ENCODE measurements at regions of chr7 and their contacts with region 1.

Region 1: DNA sequence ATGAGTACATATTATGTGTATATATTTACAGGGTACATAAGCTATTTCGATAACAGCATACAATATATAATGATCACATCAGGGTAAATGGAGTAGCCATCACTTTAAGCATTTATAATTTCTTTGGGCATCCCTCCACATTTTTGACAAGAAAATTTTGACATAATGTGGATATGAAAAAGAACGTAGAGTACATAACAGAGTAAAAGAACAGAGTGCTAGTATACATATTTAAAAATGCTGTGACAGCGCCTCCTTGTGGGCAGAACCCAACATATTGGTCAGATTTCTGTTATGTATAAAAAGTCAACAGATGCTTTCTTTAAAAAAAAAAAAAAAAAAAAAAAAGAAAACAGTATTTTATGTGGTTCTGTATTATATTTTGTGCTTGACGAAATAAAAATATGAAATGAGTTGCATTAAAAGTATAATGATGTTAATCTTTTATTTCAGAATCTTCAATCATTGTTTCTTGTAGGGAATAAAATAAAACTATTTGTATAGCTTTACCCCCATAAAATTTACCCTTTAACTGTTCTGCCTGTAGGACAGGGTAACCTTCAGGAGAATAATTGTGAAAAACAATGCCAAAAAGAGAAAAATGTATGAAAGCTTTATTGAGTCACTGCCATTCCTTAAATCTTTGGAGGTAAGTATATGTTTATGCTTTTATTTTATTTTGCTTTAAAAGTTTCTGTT is 18.3 kb upstream of the HBP1 start:
- DNase-seq: peak; percentile 64 to 86 (median 81)
- ATAC-seq: peak; percentile 88
- H3K4me3 ChIP-seq: no peak overlapping the region
- H3K4me3 Mint-ChIP-seq: no peak overlapping the region
- H3K27ac ChIP-seq: no peak overlapping the region
- H3K27ac Mint-ChIP-seq: no peak overlapping the region
- H3K4me1 ChIP-seq: no peaks in the 10 kb centered on the region
- H3K4me1 Mint-ChIP-seq: peaks cover 6% of the 10 kb centered on the region
- H3K27me3 ChIP-seq: no peaks in the 10 kb centered on the region
- H3K27me3 Mint-ChIP-seq: no peaks in the 10 kb centered on the region
- CTCF ChIP-seq: peak; percentile 95

Region 2: GRCh38 chr7:106176414-106177299 is 973.9 kb before region 1 on chr7:
- CTCF ChIA-PET with region 1: interaction called, 3 read pairs
- POLR2A ChIA-PET with region 1: no interaction called
- intact Hi-C with region 1: loop called in 1 of 2 experiments (anchors 5 kb)
- DNase-seq: peak; percentile 46 to 81 (median 69)
- ATAC-seq: peak; percentile 79
- H3K4me3 ChIP-seq: no peak overlapping the region
- H3K4me3 Mint-ChIP-seq: no peak overlapping the region
- H3K27ac ChIP-seq: no peak overlapping the region
- H3K27ac Mint-ChIP-seq: no peak overlapping the region
- H3K4me1 ChIP-seq: no peaks in the 10 kb centered on the region
- H3K4me1 Mint-ChIP-seq: peaks cover 2% of the 10 kb centered on the region
- H3K27me3 ChIP-seq: peaks cover 2 to 4% of the 10 kb centered on the region in 2 experiments
- H3K27me3 Mint-ChIP-seq: peaks cover 10% of the 10 kb centered on the region
- CTCF ChIP-seq: peak; percentile 85

Region 3: DNA sequence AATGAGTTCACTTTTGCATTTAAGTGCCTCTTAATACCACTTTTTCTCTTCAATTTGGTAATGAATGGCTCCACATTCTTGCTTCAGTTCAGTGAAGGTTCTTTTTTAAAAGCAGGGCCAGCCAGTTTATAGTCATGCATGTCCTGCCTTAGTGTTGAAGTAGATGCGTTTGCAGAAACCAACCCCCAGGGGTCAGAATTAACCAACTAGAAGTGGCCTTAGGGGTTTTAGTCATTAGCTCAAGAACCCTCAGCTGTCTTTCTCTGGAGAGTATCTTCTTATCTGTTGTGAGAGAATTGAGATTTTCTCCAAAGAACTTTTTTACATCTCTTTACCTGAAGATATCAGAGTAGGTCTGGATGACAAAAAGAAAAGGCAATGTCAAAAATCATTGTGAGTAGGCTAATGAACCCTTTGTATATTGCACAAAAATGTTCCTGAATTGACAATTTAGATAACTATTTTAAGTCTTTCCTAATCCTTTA is 203.2 kb before region 1 on chr7:
- CTCF ChIA-PET with region 1: interaction called, 25 read pairs
- POLR2A ChIA-PET with region 1: no interaction called
- intact Hi-C with region 1: loop called (anchors 1 kb)
- DNase-seq: peak in 5 of 9 experiments; percentile 1 to 67 (median 37)
- ATAC-seq: peak; percentile 66
- H3K4me3 ChIP-seq: no peak overlapping the region
- H3K4me3 Mint-ChIP-seq: no peak overlapping the region
- H3K27ac ChIP-seq: no peak overlapping the region
- H3K27ac Mint-ChIP-seq: no peak overlapping the region
- H3K4me1 ChIP-seq: no peaks in the 10 kb centered on the region
- H3K4me1 Mint-ChIP-seq: no peaks in the 10 kb centered on the region
- H3K27me3 ChIP-seq: no peaks in the 10 kb centered on the region
- H3K27me3 Mint-ChIP-seq: no peaks in the 10 kb centered on the region
- CTCF ChIP-seq: peak; percentile 39

Region 4: GRCh38 chr7:107130487-107131225 is 19.9 kb before region 1 on chr7:
- CTCF ChIA-PET with region 1: interaction called, 16 read pairs
- POLR2A ChIA-PET with region 1: interaction called, 5 read pairs
- intact Hi-C with region 1: no loop called
- DNase-seq: no peak
- ATAC-seq: no peak
- H3K4me3 ChIP-seq: no peak overlapping the region
- H3K4me3 Mint-ChIP-seq: no peak overlapping the region
- H3K27ac ChIP-seq: no peak overlapping the region
- H3K27ac Mint-ChIP-seq: no peak overlapping the region
- H3K4me1 ChIP-seq: peaks cover 8% of the 10 kb centered on the region
- H3K4me1 Mint-ChIP-seq: peaks cover 15% of the 10 kb centered on the region
- H3K27me3 ChIP-seq: no peaks in the 10 kb centered on the region
- H3K27me3 Mint-ChIP-seq: no peaks in the 10 kb centered on the region
- CTCF ChIP-seq: no peak

Region 5: GRCh38 chr7:107180378-107180777 is 29.9 kb after region 1 on chr7:
- CTCF ChIA-PET with region 1: interaction called, 4 read pairs
- POLR2A ChIA-PET with region 1: no interaction called
- intact Hi-C with region 1: loop called in 1 of 2 experiments (anchors 5 kb)
- DNase-seq: peak in 8 of 9 experiments; percentile 43 to 78 (median 70)
- ATAC-seq: peak; percentile 65
- H3K4me3 ChIP-seq: no peak overlapping the region
- H3K4me3 Mint-ChIP-seq: no peak overlapping the region
- H3K27ac ChIP-seq: no peak overlapping the region
- H3K27ac Mint-ChIP-seq: peak overlapping the region; percentile 8
- H3K4me1 ChIP-seq: peaks cover 33% of the 10 kb centered on the region
- H3K4me1 Mint-ChIP-seq: peaks cover 63% of the 10 kb centered on the region
- H3K27me3 ChIP-seq: no peaks in the 10 kb centered on the region
- H3K27me3 Mint-ChIP-seq: no peaks in the 10 kb centered on the region
- CTCF ChIP-seq: no peak

Region 6: DNA sequence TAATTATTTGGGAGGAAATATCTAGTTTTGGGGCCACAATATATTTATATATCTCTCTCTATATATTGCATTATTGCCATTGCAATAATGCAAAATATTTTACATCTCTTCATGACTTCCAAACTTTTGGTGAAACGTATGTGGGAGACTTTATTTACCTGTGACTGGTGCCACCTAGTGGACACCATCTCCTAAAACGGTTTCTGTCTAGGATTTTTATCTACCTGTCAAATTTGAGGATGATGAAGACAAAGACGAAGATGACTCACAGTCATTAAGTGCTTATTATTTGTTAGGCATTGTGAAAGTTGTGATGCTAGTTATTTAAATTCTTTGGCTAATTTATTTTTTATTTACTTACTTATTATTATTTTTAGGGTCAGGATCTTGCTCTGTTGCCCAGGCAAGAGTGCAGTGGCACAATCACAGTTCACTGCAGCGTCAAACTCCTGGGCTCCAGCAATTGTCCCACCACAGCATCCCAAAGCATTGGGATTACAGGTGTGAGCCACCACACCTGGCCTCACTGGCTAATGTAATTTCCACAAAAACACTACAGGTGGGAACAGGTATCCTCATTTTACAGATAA is 574.7 kb after region 1 on chr7:
- CTCF ChIA-PET with region 1: interaction called, 13 read pairs
- POLR2A ChIA-PET with region 1: no interaction called
- intact Hi-C with region 1: loop called (anchors 1 kb)
- DNase-seq: peak in 8 of 9 experiments; percentile 15 to 77 (median 48)
- ATAC-seq: peak; percentile 38
- H3K4me3 ChIP-seq: no peak overlapping the region
- H3K4me3 Mint-ChIP-seq: no peak overlapping the region
- H3K27ac ChIP-seq: no peak overlapping the region
- H3K27ac Mint-ChIP-seq: no peak overlapping the region
- H3K4me1 ChIP-seq: no peaks in the 10 kb centered on the region
- H3K4me1 Mint-ChIP-seq: no peaks in the 10 kb centered on the region
- H3K27me3 ChIP-seq: no peaks in the 10 kb centered on the region
- H3K27me3 Mint-ChIP-seq: peaks cover 15% of the 10 kb centered on the region
- CTCF ChIP-seq: peak; percentile 84

Region 7: DNA sequence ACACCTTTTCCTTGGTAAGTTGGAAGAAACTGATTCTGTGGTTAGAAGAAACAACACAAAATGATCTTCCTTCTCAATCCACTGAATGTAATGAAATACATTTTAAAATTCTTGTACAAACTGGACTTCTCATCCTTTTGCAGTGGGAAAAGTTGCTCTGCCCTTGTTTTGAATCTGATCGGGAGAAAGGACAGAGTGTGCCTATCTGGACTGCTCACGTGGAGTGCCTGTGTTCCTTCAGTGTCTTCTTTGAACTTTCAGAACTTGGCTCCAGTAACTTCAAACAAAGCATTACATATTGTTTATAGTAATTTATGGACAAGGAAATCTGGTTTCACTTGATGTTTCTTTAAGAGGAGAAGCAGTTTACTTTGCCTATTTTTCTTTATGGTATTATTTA is 635.4 kb after region 1 on chr7:
- CTCF ChIA-PET with region 1: no interaction called
- POLR2A ChIA-PET with region 1: no interaction called
- intact Hi-C with region 1: no loop called
- DNase-seq: no peak
- ATAC-seq: no peak
- H3K4me3 ChIP-seq: no peak overlapping the region
- H3K4me3 Mint-ChIP-seq: no peak overlapping the region
- H3K27ac ChIP-seq: no peak overlapping the region
- H3K27ac Mint-ChIP-seq: no peak overlapping the region
- H3K4me1 ChIP-seq: no peaks in the 10 kb centered on the region
- H3K4me1 Mint-ChIP-seq: peaks cover 5% of the 10 kb centered on the region
- H3K27me3 ChIP-seq: no peaks in the 10 kb centered on the region
- H3K27me3 Mint-ChIP-seq: peaks cover 13% of the 10 kb centered on the region
- CTCF ChIP-seq: no peak